SK-N-SH (cell line): ENCODE measurements at regions of chr2 and their contacts with region 1.

Region 1: GRCh38 chr2:232327105-232328041 is 51.2 kb upstream of the ALPP start:
- DNase-seq: peak; percentile 85
- H3K4me3 ChIP-seq: no peak overlapping the region
- H3K27ac ChIP-seq: no peak overlapping the region; a peak in 1 of 4 replicates
- H3K4me1 ChIP-seq: peaks cover 0 to 6% of the 10 kb centered on the region in 2 experiments; a peak in 1 of 4 replicates
- H3K27me3 ChIP-seq: no peaks in the 10 kb centered on the region
- CTCF ChIP-seq: peak; percentile 90
- EP300 ChIP-seq: no peak
- RAD21 ChIP-seq: peak; percentile 68

Region 2: GRCh38 chr2:232142049-232142448 is 185.3 kb before region 1 on chr2:
- CTCF ChIA-PET with region 1: interaction called, 12 read pairs
- POLR2A ChIA-PET with region 1: no interaction called
- DNase-seq: peak; percentile 48
- H3K4me3 ChIP-seq: no peak overlapping the region; a peak in 1 of 4 replicates
- H3K27ac ChIP-seq: no peak overlapping the region
- H3K4me1 ChIP-seq: peaks cover 0 to 13% of the 10 kb centered on the region in 2 experiments; a peak in 1 of 4 replicates
- H3K27me3 ChIP-seq: no peaks in the 10 kb centered on the region
- CTCF ChIP-seq: peak; percentile 79
- EP300 ChIP-seq: no peak
- RAD21 ChIP-seq: peak; percentile 80

Region 3: DNA sequence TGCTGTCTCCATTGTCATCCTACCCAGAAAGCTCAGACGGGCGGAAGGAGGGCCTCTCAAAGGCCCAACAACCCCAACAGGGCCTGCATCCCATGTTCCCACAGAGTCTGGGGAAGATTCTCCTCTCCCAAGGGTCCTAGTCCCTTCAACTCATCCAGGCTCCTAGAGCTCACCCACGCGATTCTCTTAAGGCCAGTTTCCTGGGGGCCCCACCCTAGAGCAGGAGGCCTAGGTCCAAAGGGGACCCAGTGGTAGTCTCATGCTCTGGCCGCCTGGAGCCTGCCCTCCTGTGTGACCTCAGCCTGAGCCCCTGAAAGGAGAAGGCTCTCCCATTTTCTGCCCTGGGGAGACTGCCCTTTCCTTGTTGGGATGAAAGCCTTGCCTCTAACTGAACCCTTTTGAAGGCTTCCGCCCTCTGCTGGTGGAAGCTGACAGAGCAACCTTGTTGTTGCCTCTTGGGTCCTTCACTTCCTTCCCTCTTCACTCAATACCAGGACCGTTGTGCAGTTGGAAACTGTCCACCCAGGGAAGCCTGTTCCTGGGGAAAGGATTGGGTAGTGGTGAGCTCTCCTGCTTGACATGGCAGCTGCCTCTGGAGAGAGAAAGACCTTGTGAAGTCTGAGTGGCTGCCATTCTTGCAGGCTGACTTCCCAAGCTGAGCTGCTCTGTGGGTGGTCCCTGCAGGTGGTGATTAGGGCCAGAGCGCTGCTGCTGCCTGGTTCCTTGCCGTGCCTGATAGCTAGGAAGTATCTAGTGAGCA is 34.8 kb before region 1 on chr2:
- CTCF ChIA-PET with region 1: interaction called, 12 read pairs
- POLR2A ChIA-PET with region 1: no interaction called
- DNase-seq: peak; percentile 25
- H3K4me3 ChIP-seq: peak overlapping the region in 1 of 2 experiments; percentile 16; a peak in 1 of 4 replicates
- H3K27ac ChIP-seq: no peak overlapping the region; a peak in 1 of 4 replicates
- H3K4me1 ChIP-seq: peaks cover 0 to 3% of the 10 kb centered on the region in 2 experiments; a peak in 1 of 4 replicates
- H3K27me3 ChIP-seq: no peaks in the 10 kb centered on the region
- CTCF ChIP-seq: peak; percentile 65
- EP300 ChIP-seq: no peak
- RAD21 ChIP-seq: peak; percentile 36

Region 4: GRCh38 chr2:232315049-232315922 is 12.1 kb before region 1 on chr2:
- CTCF ChIA-PET with region 1: interaction called, 12 read pairs
- POLR2A ChIA-PET with region 1: no interaction called
- DNase-seq: no peak
- H3K4me3 ChIP-seq: no peak overlapping the region
- H3K27ac ChIP-seq: no peak overlapping the region
- H3K4me1 ChIP-seq: peaks cover 0 to 19% of the 10 kb centered on the region in 2 experiments; a peak in 1 of 4 replicates
- H3K27me3 ChIP-seq: no peaks in the 10 kb centered on the region
- CTCF ChIP-seq: no peak
- EP300 ChIP-seq: no peak
- RAD21 ChIP-seq: no peak

Region 5: GRCh38 chr2:232748038-232748437 is 420.7 kb after region 1 on chr2:
- CTCF ChIA-PET with region 1: no interaction called
- POLR2A ChIA-PET with region 1: no interaction called
- DNase-seq: no peak
- H3K4me3 ChIP-seq: no peak overlapping the region
- H3K27ac ChIP-seq: no peak overlapping the region
- H3K4me1 ChIP-seq: no peaks in the 10 kb centered on the region
- H3K27me3 ChIP-seq: no peaks in the 10 kb centered on the region
- CTCF ChIP-seq: no peak
- EP300 ChIP-seq: no peak
- RAD21 ChIP-seq: no peak